PC-3 (cell line): ENCODE measurements at regions of chr10 and their contacts with region 1.

Region 1: DNA sequence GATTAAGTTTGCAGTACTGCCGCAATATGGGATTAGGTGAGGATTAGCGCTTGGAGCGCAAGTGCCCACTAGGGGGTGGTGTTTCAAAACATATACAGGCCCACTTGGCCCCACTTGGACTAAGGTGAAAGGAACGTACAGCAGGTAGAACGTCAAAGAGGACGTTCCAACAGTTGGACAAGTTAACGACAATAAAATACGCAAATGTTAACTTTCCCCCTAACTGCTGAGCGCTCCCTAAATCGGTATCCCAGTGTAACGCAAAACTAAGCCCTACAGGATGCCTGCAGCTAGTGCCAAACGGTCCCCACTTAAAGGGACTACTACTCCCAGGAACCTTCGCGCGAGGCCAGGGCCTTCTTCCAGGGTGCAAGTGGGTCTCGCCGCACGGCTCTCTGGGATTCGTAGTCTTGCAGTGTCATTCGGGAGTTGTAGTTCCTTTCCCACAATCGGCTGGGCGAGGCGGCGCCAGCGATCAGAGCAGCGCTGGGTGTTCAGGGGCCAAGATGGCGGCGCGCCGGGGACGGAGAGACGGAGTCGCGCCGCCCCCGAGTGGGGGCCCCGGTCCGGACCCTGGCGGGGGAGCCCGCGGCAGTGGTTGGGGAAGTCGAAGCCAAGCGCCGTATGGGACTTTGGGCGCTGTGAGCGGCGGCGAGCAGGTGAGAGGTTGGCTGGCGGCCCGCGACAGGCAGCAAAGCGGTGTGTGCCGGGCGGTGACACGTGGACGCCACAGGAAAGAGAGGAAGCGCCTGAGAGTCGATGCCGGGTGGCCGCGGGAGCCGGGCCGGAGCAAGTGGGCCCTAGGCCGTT is at the start of gene PPRC1:
- DNase-seq: peak; percentile 94
- ATAC-seq: peak; percentile 92
- H3K4me3 ChIP-seq: peak within 1 kb of the TSS; percentile 89
- H3K27ac ChIP-seq: peak within 1 kb of the TSS; percentile 90
- H3K4me1 ChIP-seq: peaks cover 21% of the 10 kb centered on the region
- H3K27me3 ChIP-seq: no peaks in the 10 kb centered on the region
- CTCF ChIP-seq: peak; percentile 86
- total RNA-seq, gene PPRC1: 27.6 and 31.3 TPM in 2 replicates

Region 2: DNA sequence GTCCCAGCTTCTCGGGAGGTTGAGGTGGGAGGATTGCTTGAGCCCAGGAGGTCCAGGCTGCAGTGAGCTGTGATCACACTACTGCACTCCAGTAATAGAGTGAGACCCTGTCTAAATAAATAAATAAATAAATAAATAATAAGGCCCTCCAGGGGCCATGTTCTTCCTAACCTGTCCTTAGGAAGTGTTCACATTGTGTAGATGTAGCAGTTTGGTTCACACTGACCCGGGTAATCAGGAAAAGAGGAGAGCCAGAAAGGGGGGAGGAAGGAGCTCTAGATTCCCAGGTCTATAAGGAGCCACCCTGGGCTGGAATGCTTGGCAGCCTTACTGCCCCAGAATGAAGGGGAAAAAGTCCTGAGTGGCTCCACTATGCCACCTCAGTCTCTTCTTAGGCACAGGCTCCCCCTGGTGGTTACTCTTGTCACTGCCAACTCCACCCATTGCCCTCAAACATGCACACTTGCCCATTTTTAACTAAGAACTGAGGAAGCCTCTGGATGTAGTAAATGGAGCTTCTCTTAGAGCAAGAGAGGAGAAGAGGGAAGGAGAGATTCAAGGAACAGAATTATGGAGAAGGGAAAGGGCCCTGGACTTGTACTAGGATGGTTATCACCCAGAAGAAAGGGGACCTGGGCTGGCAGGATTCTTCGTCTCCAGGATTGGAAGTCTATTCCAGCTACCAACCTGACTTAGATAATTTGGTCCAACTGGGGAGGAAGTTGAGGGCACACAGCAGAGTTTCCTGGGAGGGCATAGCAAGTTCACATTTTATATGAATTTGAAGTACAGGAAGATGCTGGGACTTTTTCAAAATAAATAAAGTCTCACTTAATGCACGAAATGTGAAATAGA is 59.9 kb before region 1 on chr10:
- CTCF ChIA-PET with region 1: no interaction called
- POLR2A ChIA-PET with region 1: no interaction called
- intact Hi-C with region 1: no loop called
- DNase-seq: peak; percentile 80
- ATAC-seq: peak; percentile 99
- H3K4me3 ChIP-seq: no peak overlapping the region
- H3K27ac ChIP-seq: no peak overlapping the region
- H3K4me1 ChIP-seq: no peaks in the 10 kb centered on the region
- H3K27me3 ChIP-seq: no peaks in the 10 kb centered on the region
- CTCF ChIP-seq: peak; percentile 88

Region 3: GRCh38 chr10:102085336-102085735 is 47.4 kb before region 1 on chr10:
- CTCF ChIA-PET with region 1: no interaction called
- POLR2A ChIA-PET with region 1: no interaction called
- intact Hi-C with region 1: no loop called
- DNase-seq: no peak
- ATAC-seq: no peak
- H3K4me3 ChIP-seq: no peak overlapping the region
- H3K27ac ChIP-seq: no peak overlapping the region
- H3K4me1 ChIP-seq: no peaks in the 10 kb centered on the region
- H3K27me3 ChIP-seq: no peaks in the 10 kb centered on the region
- CTCF ChIP-seq: no peak

Region 4: GRCh38 chr10:102151774-102152544 is 19.2 kb after region 1 on chr10 and contains the start of gene NOLC1:
- CTCF ChIA-PET with region 1: no interaction called
- POLR2A ChIA-PET with region 1: interaction called, 3 read pairs
- intact Hi-C with region 1: loop called (anchors 1 kb)
- DNase-seq: peak; percentile 97
- ATAC-seq: peak; percentile 83
- H3K4me3 ChIP-seq: peak within 1 kb of the TSS; percentile 99
- H3K27ac ChIP-seq: peak within 1 kb of the TSS; percentile 95
- H3K4me1 ChIP-seq: peaks cover 23% of the 10 kb centered on the region
- H3K27me3 ChIP-seq: no peaks in the 10 kb centered on the region
- CTCF ChIP-seq: no peak
- total RNA-seq, gene NOLC1: 69.9 TPM in 2 replicates